GM12878 (cell line): ENCODE measurements at regions of chr17 and their contacts with region 1.

Region 1: DNA sequence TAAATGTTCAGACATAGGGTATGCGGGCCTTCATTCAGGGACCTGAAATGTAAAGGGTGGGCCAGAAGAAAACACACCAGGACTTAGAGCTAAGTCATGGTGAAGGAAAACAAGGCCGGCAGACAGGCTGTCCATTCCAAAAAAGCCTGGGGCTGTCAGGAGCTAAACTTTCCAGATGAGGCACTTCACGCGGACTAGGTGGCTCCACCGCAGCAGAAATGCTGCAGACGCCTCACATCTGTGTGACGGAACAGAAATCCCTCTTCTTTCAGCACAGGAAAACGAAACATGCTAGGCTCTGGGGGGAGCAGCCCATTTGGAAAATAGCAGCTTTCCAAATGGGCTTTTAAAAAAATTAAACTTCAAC is 88.7 kb downstream of the HS3ST3A1 start:
- DNase-seq: no peak
- ATAC-seq: no peak
- H3K4me3 ChIP-seq: no peak overlapping the region
- H3K27ac ChIP-seq: no peak overlapping the region
- H3K4me1 ChIP-seq: no peaks in the 10 kb centered on the region
- H3K27me3 ChIP-seq: no peaks in the 10 kb centered on the region
- CTCF ChIP-seq: no peak
- EP300 ChIP-seq: no peak
- POLR2A ChIP-seq: no peak
- RAD21 ChIP-seq: no peak

Region 2: DNA sequence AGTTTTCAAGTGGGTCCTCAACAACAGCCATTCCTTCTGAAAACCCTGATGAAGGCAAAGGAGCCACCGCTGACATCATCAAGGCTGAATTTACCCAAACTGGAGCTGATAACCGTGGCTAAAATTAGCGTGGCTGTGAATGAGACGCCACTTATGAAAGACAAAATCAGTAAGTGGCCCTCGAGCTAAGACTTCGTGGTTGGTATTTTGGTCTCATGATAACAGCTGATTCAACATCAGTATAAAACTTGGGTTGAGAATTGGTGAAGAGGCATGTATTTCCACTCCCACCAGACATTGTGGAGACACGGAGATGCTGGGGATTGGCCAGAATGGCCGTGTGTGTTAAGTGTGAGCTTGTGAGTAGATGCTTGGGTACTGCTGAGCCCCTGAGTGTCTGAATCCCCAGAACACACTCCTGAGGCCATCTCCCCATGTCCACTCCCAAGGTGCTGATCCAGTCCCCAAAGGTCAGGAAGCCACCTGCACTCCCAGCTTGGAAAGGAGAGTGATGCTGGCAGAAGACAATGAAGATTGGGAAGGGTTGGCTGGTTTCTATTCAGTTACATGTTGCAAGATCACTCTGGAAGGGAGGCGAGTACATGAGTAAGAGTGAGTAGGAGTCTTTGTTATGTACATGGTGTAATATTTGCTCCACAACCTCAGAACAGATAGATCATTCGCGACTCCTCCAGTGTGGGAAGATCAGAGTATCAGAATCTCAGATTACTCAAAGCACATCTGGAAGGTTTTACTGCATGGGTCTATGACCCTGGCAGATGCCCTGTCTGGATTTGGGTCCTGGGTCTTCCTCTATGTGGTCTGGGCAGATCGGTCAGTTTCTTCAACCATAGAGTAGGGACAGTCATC is 118.9 kb before region 1 on chr17:
- CTCF ChIA-PET with region 1: no interaction called
- POLR2A ChIA-PET with region 1: no interaction called
- RAD21 ChIA-PET with region 1: interaction called, 3 read pairs
- SMC1A ChIA-PET with region 1: no interaction called
- in situ Hi-C with region 1: no loop called
- intact Hi-C with region 1: loop called (anchors 10 kb)
- DNase-seq: no peak
- ATAC-seq: no peak
- H3K4me3 ChIP-seq: no peak overlapping the region
- H3K27ac ChIP-seq: no peak overlapping the region
- H3K4me1 ChIP-seq: no peaks in the 10 kb centered on the region
- H3K27me3 ChIP-seq: no peaks in the 10 kb centered on the region
- CTCF ChIP-seq: no peak
- EP300 ChIP-seq: no peak
- POLR2A ChIP-seq: no peak
- RAD21 ChIP-seq: no peak

Region 3: GRCh38 chr17:13490906-13491482 is 22.0 kb before region 1 on chr17:
- CTCF ChIA-PET with region 1: interaction called, 4 read pairs
- POLR2A ChIA-PET with region 1: interaction called, 4 read pairs
- RAD21 ChIA-PET with region 1: interaction called, 5 read pairs
- SMC1A ChIA-PET with region 1: interaction called, 10 read pairs
- in situ Hi-C with region 1: no loop called
- intact Hi-C with region 1: no loop called
- DNase-seq: no peak
- ATAC-seq: no peak
- H3K4me3 ChIP-seq: no peak overlapping the region
- H3K27ac ChIP-seq: no peak overlapping the region
- H3K4me1 ChIP-seq: no peaks in the 10 kb centered on the region
- H3K27me3 ChIP-seq: no peaks in the 10 kb centered on the region
- CTCF ChIP-seq: no peak
- EP300 ChIP-seq: no peak
- POLR2A ChIP-seq: no peak
- RAD21 ChIP-seq: no peak

Region 4: GRCh38 chr17:13601776-13602551 is 88.9 kb after region 1 on chr17 and contains the start of gene HS3ST3A1:
- CTCF ChIA-PET with region 1: no interaction called
- POLR2A ChIA-PET with region 1: no interaction called
- RAD21 ChIA-PET with region 1: no interaction called
- SMC1A ChIA-PET with region 1: no interaction called
- in situ Hi-C with region 1: no loop called
- intact Hi-C with region 1: no loop called
- DNase-seq: no peak
- ATAC-seq: no peak
- H3K4me3 ChIP-seq: no peak within 1 kb of the TSS
- H3K27ac ChIP-seq: no peak within 1 kb of the TSS
- H3K4me1 ChIP-seq: no peaks in the 10 kb centered on the region
- H3K27me3 ChIP-seq: no peaks in the 10 kb centered on the region; a peak in 1 of 4 replicates
- CTCF ChIP-seq: no peak
- EP300 ChIP-seq: no peak
- POLR2A ChIP-seq: no peak
- RAD21 ChIP-seq: no peak
- polyA plus RNA-seq, gene HS3ST3A1: not detected